IMR-90 (cell line): ENCODE measurements at regions of chr4 and their contacts with region 1.

Region 1: GRCh38 chr4:111641955-111642579 is 503.2 kb upstream of the FAM241A start:
- DNase-seq: peak; percentile 86
- ATAC-seq: peak; percentile 91
- H3K4me3 ChIP-seq: no peak overlapping the region
- H3K27ac ChIP-seq: no peak overlapping the region
- H3K4me1 ChIP-seq: no peaks in the 10 kb centered on the region; the same call in 1 of the 2 replicates
- H3K27me3 ChIP-seq: no peaks in the 10 kb centered on the region
- CTCF ChIP-seq: peak; percentile 94
- POLR2A ChIP-seq: no peak
- RAD21 ChIP-seq: peak; percentile 63

Region 2: DNA sequence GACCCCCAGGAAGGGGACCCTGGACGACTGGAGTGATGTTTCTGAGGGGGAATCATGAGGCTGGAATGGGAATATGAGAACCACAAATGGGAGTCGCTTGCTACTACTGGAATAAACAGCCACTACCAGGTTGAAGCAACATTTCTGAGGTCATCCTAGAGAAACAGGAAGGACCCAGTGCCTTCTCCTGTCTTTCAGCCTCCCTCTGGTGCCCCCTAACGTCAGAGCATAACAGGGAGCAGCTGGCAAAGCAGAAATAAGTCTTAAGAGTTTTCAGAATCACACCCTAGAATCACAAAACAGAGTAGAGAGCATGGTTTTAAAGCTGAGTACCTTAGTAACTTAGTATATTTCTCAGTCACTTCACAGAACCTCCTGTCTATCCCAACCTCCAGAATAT is 671.4 kb before region 1 on chr4:
- CTCF ChIA-PET with region 1: no interaction called
- POLR2A ChIA-PET with region 1: no interaction called
- dilution Hi-C with region 1: no loop called
- in situ Hi-C with region 1: loop called (anchors 25 kb)
- intact Hi-C with region 1: no loop called
- DNase-seq: peak; percentile 45
- ATAC-seq: peak; percentile 67
- H3K4me3 ChIP-seq: no peak overlapping the region
- H3K27ac ChIP-seq: no peak overlapping the region
- H3K4me1 ChIP-seq: no peaks in the 10 kb centered on the region
- H3K27me3 ChIP-seq: no peaks in the 10 kb centered on the region
- CTCF ChIP-seq: peak; percentile 57
- POLR2A ChIP-seq: no peak
- RAD21 ChIP-seq: peak; percentile 61

Region 3: GRCh38 chr4:111405989-111406388 is 236.1 kb before region 1 on chr4:
- CTCF ChIA-PET with region 1: no interaction called
- POLR2A ChIA-PET with region 1: no interaction called
- dilution Hi-C with region 1: no loop called
- in situ Hi-C with region 1: no loop called
- intact Hi-C with region 1: no loop called
- DNase-seq: no peak
- ATAC-seq: no peak
- H3K4me3 ChIP-seq: no peak overlapping the region
- H3K27ac ChIP-seq: no peak overlapping the region
- H3K4me1 ChIP-seq: no peaks in the 10 kb centered on the region
- H3K27me3 ChIP-seq: no peaks in the 10 kb centered on the region
- CTCF ChIP-seq: no peak
- POLR2A ChIP-seq: no peak
- RAD21 ChIP-seq: no peak

Region 4: GRCh38 chr4:111778543-111778942 is 136.5 kb after region 1 on chr4:
- CTCF ChIA-PET with region 1: no interaction called
- POLR2A ChIA-PET with region 1: no interaction called
- dilution Hi-C with region 1: no loop called
- in situ Hi-C with region 1: no loop called
- intact Hi-C with region 1: loop called (anchors 2 kb)
- DNase-seq: no peak
- ATAC-seq: no peak
- H3K4me3 ChIP-seq: no peak overlapping the region
- H3K27ac ChIP-seq: no peak overlapping the region
- H3K4me1 ChIP-seq: no peaks in the 10 kb centered on the region
- H3K27me3 ChIP-seq: no peaks in the 10 kb centered on the region
- CTCF ChIP-seq: no peak
- POLR2A ChIP-seq: no peak
- RAD21 ChIP-seq: no peak

Region 5: GRCh38 chr4:112031712-112032328 is 389.8 kb after region 1 on chr4:
- CTCF ChIA-PET with region 1: interaction called, 5 read pairs
- POLR2A ChIA-PET with region 1: no interaction called
- dilution Hi-C with region 1: no loop called
- in situ Hi-C with region 1: loop called (anchors 10 kb)
- intact Hi-C with region 1: loop called (anchors 1 kb)
- DNase-seq: peak; percentile 50
- ATAC-seq: peak; percentile 89
- H3K4me3 ChIP-seq: no peak overlapping the region
- H3K27ac ChIP-seq: no peak overlapping the region
- H3K4me1 ChIP-seq: no peaks in the 10 kb centered on the region
- H3K27me3 ChIP-seq: peaks cover 2% of the 10 kb centered on the region; the same call in 1 of the 2 replicates
- CTCF ChIP-seq: peak; percentile 69
- POLR2A ChIP-seq: no peak
- RAD21 ChIP-seq: peak; percentile 71